ENCODE measurements at regions of chr11 and their contacts with region 1.

Region 1: GRCh38 chr11:68206187-68206601 is 6.9 kb downstream of the KMT5B start:
- DNase-seq: no peak
- H3K4me3 ChIP-seq: peak overlapping the region in 1 of 59 donors; percentile 26
- H3K27ac ChIP-seq: peak overlapping the region in 16 of 59 donors; percentile 3 to 52 (median 28)
- H3K27me3 ChIP-seq: no peaks in the 10 kb centered on the region
- CTCF ChIP-seq: peak; percentile 66 to 92 (median 86)

Region 2: DNA sequence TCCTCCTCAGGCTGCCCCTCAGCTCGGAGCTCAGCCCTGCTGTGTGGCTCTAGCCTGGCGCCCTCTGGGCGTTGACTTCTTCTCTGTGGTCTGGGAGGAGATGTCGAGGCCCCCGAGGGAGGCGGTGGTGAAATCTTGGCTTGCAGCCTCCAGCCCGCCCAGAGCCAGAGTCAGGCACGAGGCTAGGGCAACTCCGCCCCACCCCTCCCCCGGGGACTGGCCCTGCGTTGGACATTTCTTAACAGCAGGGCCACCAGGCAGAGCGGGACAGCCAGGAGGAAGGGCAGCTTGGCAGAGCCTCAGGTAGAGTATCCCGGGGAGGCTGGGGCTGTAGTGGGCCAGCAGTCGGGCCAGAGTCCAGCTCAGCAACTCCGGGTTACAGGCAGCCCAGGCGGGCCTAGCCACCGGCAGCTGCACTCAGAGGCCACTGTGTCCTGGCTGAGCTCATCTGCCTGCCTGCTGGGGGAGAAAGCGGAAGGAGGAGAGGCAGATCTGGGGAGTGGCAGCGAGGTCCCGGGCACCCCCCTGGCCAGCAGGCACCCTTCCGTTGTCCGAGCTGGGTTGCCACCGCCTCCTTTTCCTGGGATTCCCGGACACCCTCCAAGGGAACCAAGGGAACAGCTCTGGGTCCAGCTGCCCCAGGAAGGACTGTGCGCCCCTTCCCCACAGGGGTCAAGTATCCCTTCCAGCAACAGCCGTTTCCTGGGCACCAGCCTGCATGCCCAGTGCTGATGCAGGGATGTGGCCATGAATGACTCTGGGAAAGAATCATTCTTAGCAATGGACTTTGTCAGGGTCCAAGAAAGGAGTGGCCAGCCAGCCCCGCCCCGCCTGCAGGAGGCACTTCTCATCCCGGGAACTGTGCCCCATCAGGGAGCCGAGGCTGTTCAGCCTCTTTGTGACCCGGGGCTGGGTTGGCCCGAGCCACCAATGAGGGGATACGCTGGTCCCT is 195.8 kb before region 1 on chr11 and contains the start of gene ALDH3B1:
- intact Hi-C with region 1: loop called in 1 of 2 experiments (anchors 5 kb)
- DNase-seq: peak in 8 of 10 donors; percentile 47 to 78 (median 71)
- H3K4me3 ChIP-seq: peak within 1 kb of the TSS; percentile 2 to 65 (median 42)
- H3K27ac ChIP-seq: peak within 1 kb of the TSS; percentile 29 to 92 (median 82)
- H3K27me3 ChIP-seq: no peaks in the 10 kb centered on the region
- CTCF ChIP-seq: peak in 3 of 56 donors; percentile 2 to 11 (median 2)
- total RNA-seq, gene ALDH3B1: 1.2 to 7.7 (median 3.1) TPM

Region 3: DNA sequence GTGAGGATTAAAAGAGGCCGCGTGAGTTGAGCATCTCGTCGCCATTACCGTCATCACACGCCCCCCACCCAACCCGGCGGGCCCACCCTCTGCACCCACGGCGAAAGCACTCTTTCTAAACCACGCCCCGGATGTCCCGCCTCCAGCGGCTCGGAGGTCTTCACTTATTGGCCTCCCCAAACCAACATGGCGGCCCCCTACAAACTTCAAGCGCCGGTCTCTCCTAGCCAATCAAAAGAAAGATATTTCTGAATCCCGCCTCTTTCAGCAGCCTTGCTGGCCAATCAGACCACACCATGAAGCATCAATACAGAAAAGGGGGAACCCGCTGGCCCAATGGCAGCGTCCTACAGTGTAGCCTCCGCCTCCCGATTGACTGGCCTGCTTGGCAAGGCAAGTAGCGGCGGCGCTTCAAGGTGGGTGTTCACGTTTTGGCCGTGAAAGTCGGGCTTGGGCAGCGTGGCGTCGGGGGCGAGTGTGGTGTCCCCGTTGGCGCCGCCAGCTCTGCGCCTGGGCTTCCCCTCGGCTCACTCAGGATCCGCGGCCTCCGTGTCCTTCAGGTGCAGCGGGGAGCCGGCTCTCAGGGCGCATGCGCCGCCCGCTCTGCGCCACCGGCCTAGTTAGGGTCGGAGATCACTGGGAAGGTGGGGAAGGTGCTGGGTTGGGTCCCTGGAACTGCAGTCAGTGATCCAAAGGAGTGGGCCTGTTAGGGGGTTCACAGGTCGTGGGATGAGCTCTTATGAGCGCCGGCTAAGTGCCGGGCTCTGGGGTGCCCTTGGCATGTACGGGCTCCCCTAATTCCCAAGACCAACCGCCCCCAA is 175.7 kb before region 1 on chr11 and contains the start of gene NDUFS8:
- intact Hi-C with region 1: loop called in 1 of 2 experiments (anchors 10 kb)
- DNase-seq: peak; percentile 95 to 99 (median 97)
- H3K4me3 ChIP-seq: peak within 1 kb of the TSS; percentile 59 to 99 (median 87)
- H3K27ac ChIP-seq: peak within 1 kb of the TSS in 58 of 59 donors; percentile 33 to 97 (median 90)
- H3K27me3 ChIP-seq: no peaks in the 10 kb centered on the region
- CTCF ChIP-seq: peak in 18 of 56 donors; percentile 8 to 51 (median 26)
- total RNA-seq, gene NDUFS8: 98.7 to 186 (median 138) TPM

Region 4: GRCh38 chr11:68076371-68077042 is 129.7 kb before region 1 on chr11:
- intact Hi-C with region 1: no loop called
- DNase-seq: no peak
- H3K4me3 ChIP-seq: no peak overlapping the region
- H3K27ac ChIP-seq: peak overlapping the region in 19 of 59 donors; percentile 3 to 64 (median 29)
- H3K27me3 ChIP-seq: no peaks in the 10 kb centered on the region
- CTCF ChIP-seq: peak in 36 of 56 donors; percentile 8 to 61 (median 34)

Region 5: GRCh38 chr11:68297812-68298658 is 91.8 kb after region 1 on chr11:
- intact Hi-C with region 1: loop called (anchors 5 kb)
- DNase-seq: peak; percentile 58 to 89 (median 65)
- H3K4me3 ChIP-seq: peak overlapping the region in 36 of 59 donors; percentile 5 to 51 (median 28)
- H3K27ac ChIP-seq: peak overlapping the region in 1 of 59 donors; percentile 13
- H3K27me3 ChIP-seq: no peaks in the 10 kb centered on the region
- CTCF ChIP-seq: peak; percentile 85 to 99 (median 97)